Aorta (tissue), 5 donors: ENCODE measurements at regions of chr11 and their contacts with region 1.

Region 1: DNA sequence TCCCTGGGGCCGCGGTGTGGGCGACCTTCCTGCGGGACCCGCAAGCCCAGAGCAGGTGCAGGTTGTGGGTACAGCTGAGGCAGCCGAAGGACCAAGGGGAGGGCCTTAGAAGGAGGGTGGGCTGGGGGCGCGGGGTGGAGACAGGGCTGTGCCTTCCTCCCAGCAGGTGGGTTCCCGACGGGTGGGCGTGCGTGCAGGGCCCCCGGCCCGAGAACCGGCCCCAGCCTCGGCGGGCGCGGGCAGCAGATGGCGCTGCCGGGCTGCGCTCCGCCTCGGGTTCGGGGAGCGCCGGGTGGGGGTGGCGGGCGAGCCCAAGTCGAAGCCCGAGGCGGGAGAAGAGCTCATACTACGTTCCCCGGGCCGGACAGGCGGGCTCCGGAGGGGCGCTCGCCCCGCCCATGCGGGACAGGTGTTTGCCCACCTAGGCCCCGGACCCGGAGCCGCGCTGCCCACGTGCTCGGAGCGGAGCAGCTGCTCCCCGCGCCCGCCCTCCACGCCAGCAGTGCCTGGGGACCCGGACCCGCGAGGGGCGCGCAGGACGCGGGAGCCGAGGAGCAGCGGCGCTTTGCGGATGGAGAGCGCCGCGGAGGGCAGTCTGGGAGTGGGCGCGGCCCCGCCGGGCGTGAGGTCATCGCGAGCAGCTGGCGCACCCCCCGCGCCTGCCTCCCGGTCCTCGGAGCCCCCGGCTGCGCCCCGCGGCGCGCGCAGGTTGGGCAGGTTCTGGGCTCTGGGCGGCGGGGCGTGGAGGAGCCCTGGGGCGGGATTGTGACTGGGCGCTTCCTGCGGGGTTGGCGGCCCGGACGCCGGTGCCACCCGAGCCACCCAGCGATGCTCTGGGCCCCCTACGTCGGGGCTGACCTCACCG is 25.3 kb downstream of the DUSP8 start:
- DNase-seq: peak in 1 of 2 donors; percentile 86
- ATAC-seq: peak; percentile 67
- H3K4me3 ChIP-seq: no peak overlapping the region
- H3K27ac ChIP-seq: no peak overlapping the region
- H3K4me1 ChIP-seq: no peaks in the 10 kb centered on the region
- H3K27me3 ChIP-seq: no peaks in the 10 kb centered on the region

Region 2: DNA sequence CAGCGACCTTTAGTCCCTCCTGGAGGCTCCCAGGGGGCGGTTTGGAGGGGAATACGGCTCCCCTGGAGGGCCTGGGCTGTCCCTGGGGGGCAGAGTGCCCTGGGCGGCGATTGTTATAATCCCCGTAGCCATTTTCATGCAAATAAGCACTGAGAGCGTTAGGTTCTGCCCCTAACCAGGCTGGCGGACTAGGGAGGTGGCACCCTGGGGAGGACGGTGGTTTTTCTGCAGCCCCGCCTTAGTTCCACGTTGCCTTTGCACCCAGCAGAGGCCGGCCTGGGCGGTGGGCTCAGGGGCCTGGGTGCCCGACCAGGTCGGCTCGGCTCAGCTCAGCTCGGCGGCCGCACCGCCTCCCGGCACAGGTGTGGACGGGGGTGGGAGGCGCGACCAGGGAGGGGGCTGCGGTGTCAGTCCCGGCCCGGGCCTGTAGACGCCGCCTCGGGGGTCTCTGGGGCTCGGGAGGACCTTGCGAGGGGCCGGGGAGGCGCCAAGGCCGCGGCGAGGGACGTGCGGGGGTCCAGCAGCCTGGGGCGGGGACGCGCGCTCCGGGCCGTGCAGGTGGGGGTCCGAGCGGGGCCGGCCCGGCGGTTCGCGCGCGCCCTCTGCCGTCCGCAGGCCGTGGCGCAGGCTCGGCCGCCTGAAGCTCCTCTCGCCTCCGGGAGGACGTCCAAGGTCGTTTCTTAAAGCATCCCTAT is 27.6 kb after region 1 on chr11:
- intact Hi-C with region 1: loop called (anchors 1 kb)
- DNase-seq: peak; percentile 62 to 88
- ATAC-seq: peak; percentile 69
- H3K4me3 ChIP-seq: no peak overlapping the region
- H3K27ac ChIP-seq: no peak overlapping the region
- H3K4me1 ChIP-seq: no peaks in the 10 kb centered on the region
- H3K27me3 ChIP-seq: no peaks in the 10 kb centered on the region

Region 3: GRCh38 chr11:1628506-1629325 is 81.9 kb after region 1 on chr11:
- intact Hi-C with region 1: loop called (anchors 5 kb)
- DNase-seq: peak; percentile 63 to 87
- ATAC-seq: peak; percentile 75
- H3K4me3 ChIP-seq: no peak overlapping the region
- H3K27ac ChIP-seq: no peak overlapping the region
- H3K4me1 ChIP-seq: no peaks in the 10 kb centered on the region
- H3K27me3 ChIP-seq: no peaks in the 10 kb centered on the region

Region 4: DNA sequence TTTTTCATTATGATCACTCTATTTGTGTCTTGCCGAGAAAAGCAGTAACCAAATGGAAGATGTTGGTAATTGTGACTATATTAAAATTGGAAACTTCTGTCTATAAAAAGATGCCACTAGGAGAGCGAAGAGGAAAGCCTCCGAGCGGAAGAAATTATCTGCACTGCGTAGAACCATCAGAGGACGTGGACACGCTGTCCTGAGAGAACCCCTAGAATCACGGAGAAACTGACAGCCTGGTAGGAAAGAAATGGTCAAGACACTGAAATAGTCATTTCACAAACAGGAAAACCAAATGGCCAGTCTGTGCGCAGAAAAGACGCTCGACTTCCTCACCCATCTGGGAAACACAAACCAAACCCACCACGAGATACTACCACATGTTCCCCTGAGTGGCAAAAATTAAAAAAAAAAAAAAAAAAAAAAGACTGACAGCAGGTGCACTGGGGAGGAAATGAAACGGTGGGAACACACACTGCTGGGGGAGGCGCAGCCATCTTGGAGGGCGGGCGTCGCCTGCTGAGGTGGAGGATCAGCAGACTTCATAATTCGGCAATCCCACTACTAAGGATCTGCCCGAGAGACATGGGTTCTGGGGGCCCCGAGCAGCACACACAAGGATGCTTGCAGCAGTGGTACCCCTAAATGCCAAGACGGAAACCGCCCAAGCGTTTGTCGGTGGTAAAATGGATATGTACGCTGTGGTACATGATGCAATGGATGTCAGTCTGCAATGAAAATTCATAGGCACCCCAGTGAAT is 182.3 kb after region 1 on chr11:
- intact Hi-C with region 1: no loop called
- DNase-seq: peak in 1 of 2 donors; percentile 46
- ATAC-seq: no peak
- H3K4me3 ChIP-seq: no peak overlapping the region
- H3K27ac ChIP-seq: no peak overlapping the region
- H3K4me1 ChIP-seq: no peaks in the 10 kb centered on the region
- H3K27me3 ChIP-seq: no peaks in the 10 kb centered on the region